Left lung (tissue), 14 donors: ENCODE measurements at regions of chr2 and their contacts with region 1.

Region 1: DNA sequence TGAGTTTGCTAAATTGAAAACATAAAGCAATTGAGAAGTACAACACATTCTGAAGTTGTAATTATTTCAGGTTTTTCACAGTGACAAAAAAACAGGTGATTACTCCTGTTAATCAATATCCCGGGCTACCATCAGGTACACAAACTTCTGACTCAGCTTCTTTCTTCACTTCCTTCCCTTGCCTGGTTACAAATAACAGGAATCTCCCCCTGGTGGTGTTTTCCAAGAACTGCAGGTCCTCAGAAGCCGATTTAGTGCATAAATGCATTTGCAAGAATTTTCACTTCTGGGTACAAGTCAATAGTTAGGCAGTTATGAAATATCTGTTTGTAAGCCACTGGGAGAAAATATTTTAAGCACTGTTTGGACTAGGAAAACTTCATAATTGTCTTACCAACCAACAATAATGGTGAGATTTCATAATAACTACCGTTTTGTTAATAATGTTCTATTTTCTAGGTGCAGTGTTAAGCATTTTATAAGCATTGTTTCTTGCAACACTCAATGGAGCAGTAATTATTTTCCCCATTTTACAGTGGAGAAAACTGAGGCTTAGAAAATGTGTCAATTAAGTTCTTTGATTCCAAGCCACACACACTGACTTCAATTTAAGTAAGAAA is 12.4 kb upstream of the GMCL1 start:
- DNase-seq: peak in 3 of 4 donors; percentile 58 to 84 (median 73)
- ATAC-seq: peak; percentile 92
- H3K4me3 ChIP-seq: no peak overlapping the region
- H3K27ac ChIP-seq: peak overlapping the region in 1 of 2 donors; percentile 15
- H3K4me1 ChIP-seq: peaks cover 0 to 12% of the 10 kb centered on the region in 2 donors
- H3K27me3 ChIP-seq: no peaks in the 10 kb centered on the region
- CTCF ChIP-seq: peak; percentile 90

Region 2: DNA sequence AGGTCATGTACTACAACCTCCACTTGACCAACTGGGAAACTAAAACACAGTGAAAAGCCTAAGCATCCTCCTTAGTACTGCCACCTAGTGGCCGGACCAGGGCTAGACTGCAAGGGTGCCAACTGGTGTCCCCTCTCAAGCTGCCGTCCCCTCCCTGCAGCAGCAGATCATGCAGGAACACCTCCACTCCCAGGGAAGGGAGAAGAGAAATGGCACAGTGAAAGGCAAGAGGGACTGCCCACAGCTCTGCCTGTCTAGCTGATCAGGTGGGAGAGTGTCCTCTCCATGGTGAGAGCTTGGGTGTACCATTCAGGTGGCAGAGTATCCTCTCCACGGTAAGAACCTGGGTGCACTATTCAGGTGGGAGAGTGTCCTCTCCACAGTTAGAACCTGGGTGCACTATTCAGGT is 251.6 kb before region 1 on chr2:
- intact Hi-C with region 1: loop called in 1 of 2 experiments (anchors 10 kb)
- DNase-seq: peak in 3 of 4 donors; percentile 32 to 76 (median 50)
- ATAC-seq: peak; percentile 65
- H3K4me3 ChIP-seq: no peak overlapping the region
- H3K27ac ChIP-seq: no peak overlapping the region
- H3K4me1 ChIP-seq: peaks cover 0 to 33% of the 10 kb centered on the region in 2 donors
- H3K27me3 ChIP-seq: no peaks in the 10 kb centered on the region
- CTCF ChIP-seq: peak; percentile 62 to 86

Region 3: DNA sequence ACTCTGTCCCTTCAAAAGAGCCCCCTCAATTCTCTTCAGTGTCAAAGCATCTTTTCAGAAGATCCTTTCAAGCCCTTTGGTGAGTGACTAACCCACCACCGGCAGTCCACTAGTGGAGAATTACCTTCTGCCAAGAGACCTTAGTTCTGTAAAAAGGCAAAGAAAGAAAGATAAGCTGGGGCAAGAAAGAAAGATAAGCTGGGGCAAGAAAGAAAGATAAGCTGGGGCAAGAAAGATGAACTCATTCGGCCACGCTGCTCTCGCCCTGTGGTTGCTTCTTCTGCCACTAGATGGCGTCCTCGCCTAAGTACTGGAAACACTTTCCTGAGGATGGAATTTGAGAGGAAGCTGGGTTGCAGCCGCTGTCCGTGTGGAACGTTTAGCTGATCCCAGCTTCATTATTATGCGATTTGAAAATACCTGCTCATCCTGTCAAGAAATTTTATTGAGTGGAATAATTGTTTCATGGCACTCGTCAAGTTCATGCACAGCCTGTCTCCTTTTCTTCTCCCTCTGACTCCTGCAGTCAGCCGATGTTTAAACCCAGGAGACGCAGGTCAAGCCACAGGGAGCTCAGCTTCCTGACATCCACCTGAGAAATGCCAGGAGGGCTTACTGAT is 92.4 kb before region 1 on chr2:
- intact Hi-C with region 1: loop called in 1 of 2 experiments (anchors 5 kb)
- DNase-seq: peak; percentile 75 to 87 (median 84)
- ATAC-seq: peak; percentile 99
- H3K4me3 ChIP-seq: peak overlapping the region in 1 of 2 donors; percentile 16
- H3K27ac ChIP-seq: no peak overlapping the region
- H3K4me1 ChIP-seq: peaks cover 0 to 8% of the 10 kb centered on the region in 2 donors
- H3K27me3 ChIP-seq: no peaks in the 10 kb centered on the region
- CTCF ChIP-seq: peak; percentile 97

Region 4: DNA sequence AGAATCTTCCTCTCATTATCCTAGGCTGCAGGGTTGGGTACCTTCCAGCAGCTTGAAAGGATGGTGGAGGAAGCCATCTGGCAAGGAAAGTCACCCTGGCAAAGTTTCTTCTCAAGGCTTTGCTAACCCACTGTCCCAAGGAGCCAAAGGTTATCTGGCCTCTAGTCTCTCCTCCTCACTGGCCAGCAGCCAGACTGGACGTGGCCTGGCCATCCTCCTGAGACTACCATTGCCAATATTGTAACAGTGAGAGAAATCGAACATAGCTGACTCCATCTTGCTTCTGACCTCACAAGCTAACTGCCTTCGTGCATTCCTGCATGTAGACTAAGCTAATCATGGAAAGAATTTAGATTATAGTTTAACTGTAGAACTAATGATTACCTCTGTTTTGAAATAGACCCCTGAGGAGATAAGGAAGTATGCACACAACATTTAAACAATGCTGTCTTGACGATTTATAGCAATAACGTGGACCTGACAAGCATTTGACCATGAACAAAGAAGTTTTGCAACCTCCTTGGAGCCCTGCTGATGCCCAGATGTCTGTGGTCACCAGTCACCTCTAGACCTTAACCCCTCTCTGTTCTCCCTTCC is 82.9 kb before region 1 on chr2:
- intact Hi-C with region 1: loop called (anchors 5 to 10 kb)
- DNase-seq: peak in 1 of 4 donors; percentile 33
- ATAC-seq: no peak
- H3K4me3 ChIP-seq: no peak overlapping the region
- H3K27ac ChIP-seq: no peak overlapping the region
- H3K4me1 ChIP-seq: no peaks in the 10 kb centered on the region
- H3K27me3 ChIP-seq: no peaks in the 10 kb centered on the region
- CTCF ChIP-seq: no peak